Pancreas (tissue), 10 donors: ENCODE measurements at regions of chr9 and their contacts with region 1.

Region 1: DNA sequence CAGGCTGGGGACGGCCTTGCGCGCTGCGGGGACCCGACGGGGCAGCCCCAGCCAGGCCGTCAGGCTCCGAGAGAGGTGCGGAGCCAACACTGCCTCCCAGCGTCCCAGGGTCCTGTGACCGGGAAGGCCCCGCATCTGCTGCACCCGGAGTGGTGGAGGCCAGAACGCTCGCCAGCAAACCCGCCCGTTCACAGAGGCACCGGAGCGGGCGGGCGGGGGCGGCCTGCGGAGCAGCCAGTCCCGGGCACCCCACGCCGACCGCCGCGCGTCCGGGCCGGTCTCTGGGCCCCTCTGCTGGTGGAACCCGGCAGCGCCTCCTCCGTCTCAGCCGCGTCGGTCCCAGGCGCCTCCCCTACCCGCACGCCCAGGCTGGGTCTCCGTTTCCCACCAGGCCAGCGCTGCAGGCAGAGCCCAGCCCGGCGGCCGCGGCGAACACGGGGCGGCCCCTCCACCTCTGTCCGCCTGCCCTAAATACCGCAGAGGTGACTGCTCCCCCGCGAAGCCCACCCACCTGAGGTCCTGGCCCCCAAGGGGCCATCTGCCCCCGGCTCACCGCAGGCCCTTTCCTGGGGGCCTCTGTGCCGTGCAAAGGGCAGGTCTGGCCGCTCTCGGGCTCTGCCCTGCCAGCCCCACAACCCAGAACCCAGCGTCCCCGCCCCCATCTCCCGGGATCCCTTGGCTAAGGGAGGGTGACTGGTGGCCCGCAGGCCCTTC is 15.9 kb downstream of the EXD3 start:
- DNase-seq: peak; percentile 59 to 90 (median 80)
- ATAC-seq: peak; percentile 81 to 91 (median 90)
- H3K4me3 ChIP-seq: peak overlapping the region in 3 of 4 donors; percentile 9 to 40 (median 30)
- H3K27ac ChIP-seq: peak overlapping the region in 2 of 4 donors; percentile 30 to 42
- H3K4me1 ChIP-seq: peaks cover 0 to 4% (median 0%) of the 10 kb centered on the region in 3 donors
- H3K27me3 ChIP-seq: no peaks in the 10 kb centered on the region
- CTCF ChIP-seq: peak; percentile 72 to 89 (median 79)

Region 2: GRCh38 chr9:137277329-137278041 is 129.5 kb before region 1 on chr9 and contains the start of gene TOR4A:
- intact Hi-C with region 1: loop called in 2 of 3 experiments (anchors 5 kb)
- DNase-seq: peak; percentile 65 to 89 (median 77)
- ATAC-seq: peak; percentile 55 to 78 (median 77)
- H3K4me3 ChIP-seq: peak within 1 kb of the TSS; percentile 10 to 45 (median 28)
- H3K27ac ChIP-seq: peak within 1 kb of the TSS; percentile 76 to 91 (median 86)
- H3K4me1 ChIP-seq: peaks cover 0 to 10% (median 8%) of the 10 kb centered on the region in 3 donors
- H3K27me3 ChIP-seq: no peaks in the 10 kb centered on the region
- CTCF ChIP-seq: no peak
- total RNA-seq, gene TOR4A: 2.5 to 6.8 (median 4.3) TPM

Region 3: DNA sequence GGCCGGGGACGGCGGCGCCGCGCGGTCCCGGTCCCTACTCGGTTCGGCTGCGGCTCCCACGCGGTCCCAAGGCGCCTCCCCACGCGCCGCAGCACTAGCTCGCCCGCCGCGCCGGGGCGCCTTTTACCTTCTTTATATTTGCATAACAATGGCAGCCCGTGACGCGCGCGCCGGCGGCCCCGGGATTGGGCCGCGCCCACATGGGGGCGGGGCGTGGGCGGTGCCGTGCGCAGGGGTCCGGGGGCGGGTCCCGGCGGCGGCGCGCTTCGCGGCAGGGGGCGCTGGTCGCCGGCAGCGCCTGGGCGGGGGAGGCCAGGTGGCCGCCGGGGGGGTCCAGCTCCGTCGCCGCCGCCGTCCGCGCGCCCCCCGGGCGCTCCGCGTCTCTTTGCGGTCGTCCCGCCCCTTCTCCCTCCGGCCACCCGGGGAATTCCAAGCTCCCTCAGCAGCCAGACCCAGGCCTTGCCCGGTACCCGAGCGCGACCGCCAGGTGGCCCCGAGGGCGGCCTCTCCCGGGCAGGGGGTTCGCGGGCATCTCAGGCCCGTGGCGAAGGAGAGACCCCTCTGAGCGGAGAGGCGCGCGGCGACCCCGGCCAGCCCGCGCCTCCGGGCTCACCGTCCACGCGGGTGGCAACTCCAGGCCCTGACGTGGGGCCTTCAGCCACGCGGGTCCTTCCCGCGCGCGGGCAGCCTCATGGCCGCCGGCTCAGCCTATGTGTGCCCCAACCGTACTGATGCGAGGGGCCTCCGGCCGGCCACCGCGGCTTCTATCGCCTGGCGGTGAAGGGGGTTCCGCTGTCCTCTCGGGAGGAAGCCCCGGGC is 104.6 kb before region 1 on chr9 and contains the start of gene NRARP:
- intact Hi-C with region 1: loop called in 1 of 3 experiments (anchors 5 kb)
- DNase-seq: peak; percentile 88 to 98 (median 94)
- ATAC-seq: peak; percentile 41 to 58 (median 56)
- H3K4me3 ChIP-seq: peak within 1 kb of the TSS; percentile 39 to 70 (median 54)
- H3K27ac ChIP-seq: peak within 1 kb of the TSS; percentile 78 to 95 (median 92)
- H3K4me1 ChIP-seq: peaks cover 26 to 50% (median 33%) of the 10 kb centered on the region in 3 donors
- H3K27me3 ChIP-seq: no peaks in the 10 kb centered on the region
- CTCF ChIP-seq: peak; percentile 34 to 49 (median 46)
- total RNA-seq, gene NRARP: 7.5 to 23.4 (median 13.6) TPM

Region 4: DNA sequence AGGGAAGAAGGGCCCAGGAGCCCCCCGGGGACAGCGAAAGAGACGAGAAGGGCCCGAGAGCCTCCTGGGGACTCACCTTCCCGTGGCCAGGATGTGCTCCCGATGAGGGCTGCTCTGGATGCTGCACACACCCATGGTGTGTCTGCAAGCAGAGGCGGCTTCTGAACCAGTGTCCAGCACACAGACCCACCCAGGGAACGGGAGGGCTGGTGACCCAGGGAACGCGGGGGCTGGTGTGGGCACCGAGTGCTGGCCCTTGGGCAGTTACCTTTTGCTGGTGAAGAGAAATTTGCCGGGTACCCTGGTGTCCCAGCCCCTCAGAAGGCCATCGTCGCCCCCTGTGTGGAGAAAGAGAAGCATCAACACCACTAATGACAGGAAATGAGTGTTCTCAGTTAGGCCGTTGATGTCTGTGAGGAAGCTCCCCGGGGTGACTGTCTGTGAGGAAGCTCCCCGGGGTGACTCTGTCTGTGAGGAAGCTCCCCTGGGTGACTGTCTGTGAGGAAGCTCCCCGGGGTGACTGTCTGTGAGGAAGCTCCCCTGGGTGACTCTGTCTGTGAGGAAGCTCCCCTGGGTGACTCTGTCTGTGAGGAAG is 157.9 kb after region 1 on chr9:
- intact Hi-C with region 1: no loop called
- DNase-seq: peak in 1 of 6 donors; percentile 3
- ATAC-seq: no peak
- H3K4me3 ChIP-seq: no peak overlapping the region
- H3K27ac ChIP-seq: no peak overlapping the region
- H3K4me1 ChIP-seq: no peaks in the 10 kb centered on the region
- H3K27me3 ChIP-seq: no peaks in the 10 kb centered on the region
- CTCF ChIP-seq: no peak